HepG2 (cell line): ENCODE measurements at regions of chr4 and their contacts with region 1.

Region 1: DNA sequence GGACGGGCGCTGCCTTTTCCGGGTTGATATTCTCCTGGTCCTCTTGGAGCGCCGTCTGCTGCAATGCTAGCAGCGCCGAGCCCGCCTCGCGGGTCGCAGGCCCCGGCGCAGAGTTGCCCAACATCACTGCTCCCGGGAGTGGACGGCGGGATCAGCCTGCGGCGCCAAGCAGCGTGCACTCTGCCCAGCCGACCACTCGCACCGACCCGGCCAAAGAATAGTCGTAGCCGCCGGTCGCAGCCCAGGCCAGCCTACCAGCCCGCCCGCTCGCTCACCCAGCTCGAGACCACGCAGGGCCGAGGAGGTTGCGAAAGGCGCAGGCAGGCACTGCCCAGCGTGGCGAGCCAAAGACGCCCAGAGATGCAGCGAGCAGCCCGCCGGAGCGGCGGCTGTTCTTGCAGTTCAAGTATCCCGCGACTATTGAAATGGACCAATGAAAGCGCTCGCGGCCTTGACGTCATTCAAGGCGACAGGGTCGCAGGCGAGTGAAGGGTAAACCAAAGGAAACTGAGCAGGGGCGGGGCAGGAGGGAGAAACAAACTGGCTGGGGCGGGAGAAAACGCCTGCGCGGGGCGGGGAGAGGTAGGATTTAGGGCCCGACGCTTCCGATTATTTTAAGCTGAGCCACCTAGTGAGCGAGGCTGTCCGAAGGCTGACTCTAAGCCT is at the start of gene CCNA2:
- DNase-seq: peak; percentile 95
- ATAC-seq: peak; percentile 92
- H3K4me3 ChIP-seq: peak within 1 kb of the TSS; percentile 79 to 99 (median 90)
- H3K27ac ChIP-seq: peak within 1 kb of the TSS; percentile 87
- H3K4me1 ChIP-seq: peaks cover 27% of the 10 kb centered on the region
- H3K27me3 ChIP-seq: no peaks in the 10 kb centered on the region; a peak in 1 of 5 replicates
- CTCF ChIP-seq: no peak
- EP300 ChIP-seq: 0 out of 4 replicates have a peak, but pooled peaks of 1 of the 2 experiments have one; percentile 41
- POLR2A ChIP-seq: peak; percentile 81 to 87
- RAD21 ChIP-seq: no peak; the same call in 1 of the 2 replicates
- total RNA-seq, gene CCNA2: 105 and 160 TPM in 2 replicates

Region 2: DNA sequence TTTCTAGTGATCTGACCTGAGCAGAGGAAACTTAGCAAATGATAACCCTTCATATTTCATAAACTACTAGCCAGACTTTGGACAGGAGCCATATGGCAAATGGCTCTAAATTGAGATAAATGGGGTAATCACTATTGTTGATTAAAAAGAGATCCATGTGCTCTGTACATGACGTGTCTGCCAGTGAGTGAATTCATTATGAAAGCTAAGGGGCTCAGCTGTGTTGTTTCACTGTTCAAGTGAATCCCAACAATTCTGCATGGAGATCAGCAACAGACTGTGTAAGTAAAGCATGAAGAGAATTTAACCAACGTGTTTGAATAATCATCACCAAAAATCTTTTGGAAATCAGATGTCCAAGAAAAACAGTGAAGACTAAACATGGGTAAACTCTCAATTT is 433.3 kb before region 1 on chr4:
- CTCF ChIA-PET with region 1: no interaction called
- POLR2A ChIA-PET with region 1: no interaction called
- in situ Hi-C with region 1: no loop called
- intact Hi-C with region 1: no loop called
- DNase-seq: no peak
- ATAC-seq: no peak
- H3K4me3 ChIP-seq: no peak overlapping the region
- H3K27ac ChIP-seq: no peak overlapping the region
- H3K4me1 ChIP-seq: no peaks in the 10 kb centered on the region
- H3K27me3 ChIP-seq: no peaks in the 10 kb centered on the region
- CTCF ChIP-seq: no peak
- EP300 ChIP-seq: no peak
- POLR2A ChIP-seq: no peak
- RAD21 ChIP-seq: no peak

Region 3: DNA sequence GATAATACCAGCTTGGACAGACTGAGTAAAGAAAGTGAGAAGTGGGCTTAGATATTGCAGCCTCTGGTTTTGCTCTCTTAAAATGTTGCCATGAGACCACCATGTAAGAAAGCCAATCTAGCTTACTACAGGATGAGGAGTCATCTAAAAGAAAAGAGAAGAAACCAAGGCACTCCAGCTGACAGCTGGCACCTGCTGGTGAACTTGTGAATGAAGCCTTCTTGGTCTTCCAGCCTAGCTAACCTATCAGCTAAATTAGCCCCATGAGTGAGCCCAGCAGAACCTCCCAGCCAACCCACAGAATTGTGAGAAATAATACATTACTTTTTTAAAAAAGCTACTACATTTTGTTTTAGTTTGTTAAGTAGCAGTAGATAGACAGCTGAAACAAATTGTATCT is 288.3 kb before region 1 on chr4:
- CTCF ChIA-PET with region 1: no interaction called
- POLR2A ChIA-PET with region 1: no interaction called
- in situ Hi-C with region 1: no loop called
- intact Hi-C with region 1: no loop called
- DNase-seq: no peak
- ATAC-seq: no peak
- H3K4me3 ChIP-seq: no peak overlapping the region
- H3K27ac ChIP-seq: no peak overlapping the region
- H3K4me1 ChIP-seq: no peaks in the 10 kb centered on the region
- H3K27me3 ChIP-seq: no peaks in the 10 kb centered on the region; a peak in 1 of 5 replicates
- CTCF ChIP-seq: no peak
- EP300 ChIP-seq: no peak
- POLR2A ChIP-seq: no peak
- RAD21 ChIP-seq: no peak

Region 4: GRCh38 chr4:121736735-121737351 is 86.8 kb before region 1 on chr4:
- CTCF ChIA-PET with region 1: no interaction called
- POLR2A ChIA-PET with region 1: no interaction called
- in situ Hi-C with region 1: no loop called
- intact Hi-C with region 1: no loop called
- DNase-seq: peak; percentile 61
- ATAC-seq: peak; percentile 89
- H3K4me3 ChIP-seq: no peak overlapping the region
- H3K27ac ChIP-seq: no peak overlapping the region
- H3K4me1 ChIP-seq: no peaks in the 10 kb centered on the region
- H3K27me3 ChIP-seq: peaks cover 0 to 2% of the 10 kb centered on the region in 2 experiments; a peak in 1 of 5 replicates
- CTCF ChIP-seq: peak; percentile 78
- EP300 ChIP-seq: no peak
- POLR2A ChIP-seq: no peak
- RAD21 ChIP-seq: peak; percentile 44

Region 5: GRCh38 chr4:121800961-121801714 is 22.5 kb before region 1 on chr4 and contains the start of gene EXOSC9:
- CTCF ChIA-PET with region 1: no interaction called
- POLR2A ChIA-PET with region 1: interaction called, 14 read pairs
- in situ Hi-C with region 1: no loop called
- intact Hi-C with region 1: loop called (anchors 1 kb)
- DNase-seq: peak; percentile 87
- ATAC-seq: peak; percentile 87
- H3K4me3 ChIP-seq: peak within 1 kb of the TSS; percentile 79 to 86 (median 84)
- H3K27ac ChIP-seq: peak within 1 kb of the TSS; percentile 93
- H3K4me1 ChIP-seq: peaks cover 47% of the 10 kb centered on the region
- H3K27me3 ChIP-seq: no peaks in the 10 kb centered on the region; a peak in 1 of 5 replicates
- CTCF ChIP-seq: no peak
- EP300 ChIP-seq: no peak; a peak in 1 of 4 replicates
- POLR2A ChIP-seq: peak; percentile 88 to 92
- RAD21 ChIP-seq: 0 out of 2 replicates have a peak, but pooled peaks have one; percentile 10
- total RNA-seq, gene EXOSC9: 48.0 and 61.5 TPM in 2 replicates

Region 6: GRCh38 chr4:121869841-121870656 is 46.4 kb after region 1 on chr4 and contains the start of gene BBS7:
- CTCF ChIA-PET with region 1: no interaction called
- POLR2A ChIA-PET with region 1: interaction called, 5 read pairs
- in situ Hi-C with region 1: no loop called
- intact Hi-C with region 1: loop called (anchors 2 kb)
- DNase-seq: peak; percentile 94
- ATAC-seq: peak; percentile 98
- H3K4me3 ChIP-seq: peak within 1 kb of the TSS; percentile 86 to 89 (median 86)
- H3K27ac ChIP-seq: peak within 1 kb of the TSS; percentile 64
- H3K4me1 ChIP-seq: peaks cover 14% of the 10 kb centered on the region
- H3K27me3 ChIP-seq: no peaks in the 10 kb centered on the region; a peak in 1 of 5 replicates
- CTCF ChIP-seq: no peak; the same call in 1 of the 2 replicates
- EP300 ChIP-seq: no peak
- POLR2A ChIP-seq: peak; percentile 64 to 96
- RAD21 ChIP-seq: no peak
- total RNA-seq, gene BBS7: 15.7 and 21.6 TPM in 2 replicates

Region 7: GRCh38 chr4:122151982-122152710 is 328.5 kb after region 1 on chr4 and contains the start of gene BLTP1:
- CTCF ChIA-PET with region 1: no interaction called
- POLR2A ChIA-PET with region 1: no interaction called
- in situ Hi-C with region 1: no loop called
- intact Hi-C with region 1: loop called (anchors 5 kb)
- DNase-seq: peak; percentile 75
- ATAC-seq: peak; percentile 97
- H3K4me3 ChIP-seq: peak within 1 kb of the TSS; percentile 79 to 94 (median 86)
- H3K27ac ChIP-seq: peak within 1 kb of the TSS; percentile 68
- H3K4me1 ChIP-seq: peaks cover 25% of the 10 kb centered on the region
- H3K27me3 ChIP-seq: no peaks in the 10 kb centered on the region; a peak in 1 of 5 replicates
- CTCF ChIP-seq: no peak
- EP300 ChIP-seq: no peak
- POLR2A ChIP-seq: peak in 1 of 2 experiments; percentile 73; a peak in 2 of 4 replicates
- RAD21 ChIP-seq: no peak
- total RNA-seq, gene BLTP1: 25.3 and 27.7 TPM in 2 replicates

Region 8: GRCh38 chr4:122922877-122923511 is 1099.4 kb after region 1 on chr4:
- CTCF ChIA-PET with region 1: no interaction called
- POLR2A ChIA-PET with region 1: no interaction called
- in situ Hi-C with region 1: no loop called
- intact Hi-C with region 1: loop called (anchors 5 kb)
- DNase-seq: peak; percentile 75
- ATAC-seq: peak; percentile 97
- H3K4me3 ChIP-seq: peak overlapping the region; percentile 89 to 95 (median 92)
- H3K27ac ChIP-seq: peak overlapping the region; percentile 89
- H3K4me1 ChIP-seq: peaks cover 42% of the 10 kb centered on the region
- H3K27me3 ChIP-seq: no peaks in the 10 kb centered on the region; a peak in 1 of 5 replicates
- CTCF ChIP-seq: no peak
- EP300 ChIP-seq: peak; percentile 17 to 45; a peak in 2 of 4 replicates
- POLR2A ChIP-seq: peak; percentile 45 to 55; a peak in 1 of 4 replicates
- RAD21 ChIP-seq: no peak